Activated CD8-positive, alpha-beta T cell treated with anti-CD3 and anti-CD28 coated beads, Interleukin-2, amount 10 ng/mL, durations not matched to agents 7 days and 5 days (primary cell): ENCODE measurements at regions of chr6 and their contacts with region 1.

Region 1: GRCh38 chr6:99425647-99426453 is 742 bp upstream of the PNISR start:
- DNase-seq: peak; percentile 69
- ATAC-seq: peak; percentile 62
- H3K4me3 Mint-ChIP-seq: peak overlapping the region; percentile 89
- H3K27ac Mint-ChIP-seq: peak overlapping the region; percentile 100
- H3K4me1 Mint-ChIP-seq: peaks cover 55% of the 10 kb centered on the region
- H3K27me3 Mint-ChIP-seq: no peaks in the 10 kb centered on the region

Region 2: DNA sequence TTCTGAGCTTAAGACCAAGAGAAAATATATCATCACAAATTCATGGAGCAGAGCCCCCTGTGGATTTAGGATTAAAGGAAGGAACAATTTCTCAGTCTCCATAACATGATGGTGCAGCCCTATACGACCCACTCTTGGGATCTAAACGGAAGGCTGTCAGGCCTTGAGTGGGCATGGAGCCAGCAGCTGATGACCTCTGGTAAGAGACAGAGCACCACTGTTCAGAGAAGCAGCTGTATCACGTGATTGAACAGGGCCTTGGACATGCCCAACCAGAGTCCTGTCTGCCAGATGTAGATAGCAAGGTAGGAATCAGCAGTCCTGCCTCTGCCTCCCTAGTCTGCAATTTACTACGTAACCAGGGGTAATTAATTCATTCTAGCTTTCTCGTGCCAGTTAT is 850.9 kb before region 1 on chr6:
- CTCF ChIA-PET with region 1: no interaction called
- POLR2A ChIA-PET with region 1: no interaction called
- DNase-seq: no peak
- ATAC-seq: no peak
- H3K4me3 Mint-ChIP-seq: no peak overlapping the region
- H3K27ac Mint-ChIP-seq: no peak overlapping the region
- H3K4me1 Mint-ChIP-seq: no peaks in the 10 kb centered on the region
- H3K27me3 Mint-ChIP-seq: no peaks in the 10 kb centered on the region

Region 3: GRCh38 chr6:99393698-99394531 is 31.9 kb before region 1 on chr6 and contains the start of gene COQ3:
- CTCF ChIA-PET with region 1: interaction called, 3 read pairs
- POLR2A ChIA-PET with region 1: interaction called, 24 read pairs
- DNase-seq: peak; percentile 74
- ATAC-seq: peak; percentile 87
- H3K4me3 Mint-ChIP-seq: peak within 1 kb of the TSS; percentile 95
- H3K27ac Mint-ChIP-seq: peak within 1 kb of the TSS; percentile 91
- H3K4me1 Mint-ChIP-seq: peaks cover 16% of the 10 kb centered on the region
- H3K27me3 Mint-ChIP-seq: no peaks in the 10 kb centered on the region
- total RNA-seq, gene COQ3: 12.6 to 13.3 TPM

Region 4: DNA sequence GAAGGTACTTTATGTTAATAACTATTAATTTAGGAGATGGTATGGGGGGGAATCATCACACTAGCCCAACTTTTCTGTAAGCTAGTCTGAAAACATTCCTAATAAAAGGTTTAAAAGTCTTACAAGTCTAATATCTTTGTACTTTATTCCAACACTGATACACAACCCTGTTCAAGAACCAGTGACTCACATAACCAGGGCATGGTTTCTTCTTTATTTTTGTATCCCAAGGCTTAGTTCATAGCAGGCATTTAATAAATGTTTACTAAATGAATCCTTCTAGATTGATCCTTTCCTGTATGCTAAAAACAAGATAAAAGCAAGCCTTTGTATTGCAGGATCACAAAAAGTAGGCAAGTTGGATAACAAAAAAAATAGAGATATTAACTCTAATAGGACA is 10.4 kb before region 1 on chr6:
- CTCF ChIA-PET with region 1: interaction called, 6 read pairs
- POLR2A ChIA-PET with region 1: interaction called, 12 read pairs
- DNase-seq: no peak
- ATAC-seq: no peak
- H3K4me3 Mint-ChIP-seq: no peak overlapping the region
- H3K27ac Mint-ChIP-seq: no peak overlapping the region
- H3K4me1 Mint-ChIP-seq: peaks cover 19% of the 10 kb centered on the region
- H3K27me3 Mint-ChIP-seq: no peaks in the 10 kb centered on the region